ENCODE measurements at regions of chr3 and their contacts with region 1.

Region 1: GRCh38 chr3:45929042-45929679 is 14.1 kb upstream of the CXCR6 start:
- DNase-seq: peak; percentile 49 to 79 (median 64)
- ATAC-seq: peak; percentile 88
- H3K4me3 ChIP-seq: no peak overlapping the region
- H3K4me3 Mint-ChIP-seq: no peak overlapping the region
- H3K27ac ChIP-seq: no peak overlapping the region
- H3K27ac Mint-ChIP-seq: peak overlapping the region in 2 of 9 donors; percentile 54 to 73
- H3K4me1 ChIP-seq: no peaks in the 10 kb centered on the region
- H3K4me1 Mint-ChIP-seq: peaks cover 4 to 9% (median 5%) of the 10 kb centered on the region in 7 donors
- H3K27me3 ChIP-seq: no peaks in the 10 kb centered on the region
- H3K27me3 Mint-ChIP-seq: no peaks in the 10 kb centered on the region

Region 2: DNA sequence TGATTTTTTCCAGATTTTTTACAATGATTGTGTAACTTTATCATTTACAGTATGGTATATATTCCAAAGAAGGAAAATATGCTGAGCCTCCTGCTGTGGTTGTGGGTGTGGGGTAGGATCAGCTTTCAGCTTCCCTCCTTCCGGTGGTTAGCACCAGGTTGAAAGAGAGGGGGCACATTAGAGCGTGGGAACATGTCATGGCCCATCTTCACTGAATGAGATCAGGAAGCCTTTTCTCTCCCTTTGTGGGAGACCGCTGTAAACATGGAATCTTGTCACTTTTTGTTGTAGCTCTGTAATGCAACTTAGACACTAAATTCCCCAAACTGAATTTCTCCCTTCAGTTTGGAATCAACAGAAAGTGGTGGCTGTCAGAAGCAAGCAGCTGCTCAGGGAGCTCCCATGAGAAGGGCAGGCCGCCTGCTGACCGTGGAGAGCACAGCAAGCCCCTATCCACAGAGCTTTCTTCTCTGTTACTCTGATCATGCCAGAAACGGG is 421.3 kb before region 1 on chr3:
- CTCF ChIA-PET with region 1: interaction called, 3 read pairs
- POLR2A ChIA-PET with region 1: no interaction called
- intact Hi-C with region 1: loop called in 1 of 2 experiments (anchors 1 kb)
- DNase-seq: peak in 3 of 9 donors; percentile 8 to 17 (median 14)
- ATAC-seq: no peak
- H3K4me3 ChIP-seq: no peak overlapping the region
- H3K4me3 Mint-ChIP-seq: no peak overlapping the region
- H3K27ac ChIP-seq: no peak overlapping the region
- H3K27ac Mint-ChIP-seq: no peak overlapping the region
- H3K4me1 ChIP-seq: peaks cover 0 to 13% of the 10 kb centered on the region in 2 donors
- H3K4me1 Mint-ChIP-seq: peaks cover 0 to 13% (median 0%) of the 10 kb centered on the region in 7 donors
- H3K27me3 ChIP-seq: no peaks in the 10 kb centered on the region
- H3K27me3 Mint-ChIP-seq: no peaks in the 10 kb centered on the region

Region 3: GRCh38 chr3:45656575-45657363 is 272.4 kb before region 1 on chr3:
- CTCF ChIA-PET with region 1: interaction called, 4 read pairs
- POLR2A ChIA-PET with region 1: no interaction called
- intact Hi-C with region 1: loop called in 1 of 2 experiments (anchors 1 kb)
- DNase-seq: peak; percentile 65 to 83 (median 78)
- ATAC-seq: peak; percentile 94
- H3K4me3 ChIP-seq: no peak overlapping the region
- H3K4me3 Mint-ChIP-seq: no peak overlapping the region
- H3K27ac ChIP-seq: no peak overlapping the region
- H3K27ac Mint-ChIP-seq: peak overlapping the region in 1 of 9 donors; percentile 30
- H3K4me1 ChIP-seq: no peaks in the 10 kb centered on the region
- H3K4me1 Mint-ChIP-seq: peaks cover 6 to 27% (median 18%) of the 10 kb centered on the region in 7 donors
- H3K27me3 ChIP-seq: no peaks in the 10 kb centered on the region
- H3K27me3 Mint-ChIP-seq: no peaks in the 10 kb centered on the region

Region 4: GRCh38 chr3:45760878-45761711 is 168.1 kb before region 1 on chr3:
- CTCF ChIA-PET with region 1: interaction called, 9 read pairs
- POLR2A ChIA-PET with region 1: interaction called, 3 read pairs
- intact Hi-C with region 1: loop called in 1 of 2 experiments (anchors 1 kb)
- DNase-seq: peak in 7 of 9 donors; percentile 10 to 46 (median 33)
- ATAC-seq: peak; percentile 71
- H3K4me3 ChIP-seq: no peak overlapping the region
- H3K4me3 Mint-ChIP-seq: peak overlapping the region in 1 of 10 donors; percentile 16
- H3K27ac ChIP-seq: no peak overlapping the region
- H3K27ac Mint-ChIP-seq: no peak overlapping the region
- H3K4me1 ChIP-seq: no peaks in the 10 kb centered on the region
- H3K4me1 Mint-ChIP-seq: peaks cover 0 to 6% (median 3%) of the 10 kb centered on the region in 7 donors
- H3K27me3 ChIP-seq: no peaks in the 10 kb centered on the region
- H3K27me3 Mint-ChIP-seq: peaks cover 0 to 10% (median 3%) of the 10 kb centered on the region in 5 donors

Region 5: GRCh38 chr3:45870099-45870498 is 59.1 kb before region 1 on chr3:
- CTCF ChIA-PET with region 1: no interaction called
- POLR2A ChIA-PET with region 1: no interaction called
- intact Hi-C with region 1: loop called in 1 of 2 experiments (anchors 2 kb)
- DNase-seq: peak in 8 of 9 donors; percentile 33 to 92 (median 88)
- ATAC-seq: peak; percentile 96
- H3K4me3 ChIP-seq: no peak overlapping the region
- H3K4me3 Mint-ChIP-seq: peak overlapping the region in 9 of 10 donors; percentile 0 to 74 (median 45)
- H3K27ac ChIP-seq: no peak overlapping the region
- H3K27ac Mint-ChIP-seq: peak overlapping the region in 8 of 9 donors; percentile 5 to 85 (median 44)
- H3K4me1 ChIP-seq: peaks cover 27 to 28% of the 10 kb centered on the region in 2 donors
- H3K4me1 Mint-ChIP-seq: peaks cover 18 to 58% (median 45%) of the 10 kb centered on the region in 7 donors
- H3K27me3 ChIP-seq: no peaks in the 10 kb centered on the region
- H3K27me3 Mint-ChIP-seq: peaks cover 0 to 70% (median 0%) of the 10 kb centered on the region in 5 donors